ENCODE measurements at regions of chr14 and their contacts with region 1.

Region 1: GRCh38 chr14:61456720-61457119 is 135.3 kb downstream of the PRKCH start:
- DNase-seq: peak; percentile 68
- CTCF ChIP-seq: peak; percentile 81

Region 2: GRCh38 chr14:61280526-61281185 is 176.1 kb before region 1 on chr14:
- in situ Hi-C with region 1: loop called (anchors 10 kb)
- DNase-seq: peak; percentile 69
- CTCF ChIP-seq: peak; percentile 30

Region 3: GRCh38 chr14:61837336-61838229 is 380.9 kb after region 1 on chr14:
- in situ Hi-C with region 1: loop called (anchors 5 kb)
- DNase-seq: peak; percentile 66
- CTCF ChIP-seq: peak; percentile 91

Region 4: GRCh38 chr14:62015945-62016344 is 559.2 kb after region 1 on chr14:
- in situ Hi-C with region 1: no loop called
- DNase-seq: no peak
- CTCF ChIP-seq: no peak

Region 5: DNA sequence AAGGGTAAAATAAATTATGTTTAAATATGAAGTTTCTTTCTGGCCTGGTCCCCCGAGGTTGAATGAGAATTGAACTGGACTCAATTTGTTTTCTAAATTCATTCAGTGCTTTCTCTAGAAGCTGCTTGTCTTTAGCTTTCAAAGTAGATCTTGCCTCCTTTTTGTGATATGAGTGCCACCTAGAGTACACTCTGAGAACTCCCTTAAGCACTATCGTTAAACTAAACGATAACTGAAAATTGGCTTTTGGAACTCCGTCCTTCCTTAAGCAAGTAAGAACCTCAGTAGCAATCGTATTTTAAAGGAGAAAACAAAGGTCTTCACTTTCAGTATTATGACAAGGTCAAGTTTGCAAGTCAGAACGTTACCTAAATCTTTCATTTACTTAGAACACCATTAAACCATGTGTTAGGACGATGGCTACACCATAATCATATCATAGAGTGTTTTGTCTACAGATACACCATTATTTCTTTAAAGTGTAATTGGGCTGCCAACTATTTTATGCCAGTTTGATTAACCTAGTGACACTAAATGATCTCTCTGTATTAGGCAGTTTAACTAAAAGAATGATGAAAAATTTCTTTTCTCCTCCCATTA is 670.3 kb after region 1 on chr14:
- in situ Hi-C with region 1: loop called (anchors 25 kb)
- DNase-seq: peak; percentile 30
- CTCF ChIP-seq: peak; percentile 62